Motor neuron (in vitro differentiated cells): ENCODE measurements at regions of chr3 and their contacts with region 1.

Region 1: DNA sequence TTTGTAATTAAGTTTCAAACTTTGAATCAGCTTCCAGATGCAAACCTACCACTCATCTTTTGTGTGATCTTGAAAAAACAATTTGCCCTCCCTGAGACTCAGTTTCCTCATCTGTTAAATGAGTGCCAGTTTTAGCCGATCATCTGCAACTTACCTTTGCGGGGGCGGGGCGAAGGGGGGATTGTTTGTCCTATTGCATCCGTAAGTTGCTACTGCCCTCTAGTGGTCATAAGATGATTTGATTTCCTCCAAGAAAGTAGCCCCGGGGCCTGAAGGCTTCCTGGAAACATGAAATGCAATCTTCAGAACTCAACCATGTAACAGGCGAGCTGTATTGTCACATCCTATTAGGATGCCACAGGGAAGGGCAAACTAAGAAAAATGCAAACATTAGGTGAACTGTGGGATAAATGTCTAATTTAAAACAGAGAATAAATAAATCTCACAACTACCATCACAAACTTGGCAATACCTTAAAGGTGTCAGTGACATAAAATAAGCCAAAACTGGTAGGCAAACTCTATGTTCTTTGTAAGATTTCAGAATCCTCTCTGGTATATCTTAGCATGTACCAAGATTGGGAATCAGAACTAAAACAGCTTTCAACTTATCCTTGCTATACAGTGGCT is 63.5 kb upstream of the CLDN18 start:
- ATAC-seq: peak in 4 of 8 experiments; percentile 27 to 77 (median 70)
- H3K4me3 ChIP-seq: no peak overlapping the region
- H3K27ac ChIP-seq: no peak overlapping the region
- H3K4me1 ChIP-seq: no peaks in the 10 kb centered on the region

Region 2: GRCh38 chr3:137514853-137515252 is 431.6 kb before region 1 on chr3:
- in situ Hi-C with region 1: no loop called
- ATAC-seq: no peak
- H3K4me3 ChIP-seq: no peak overlapping the region
- H3K27ac ChIP-seq: no peak overlapping the region
- H3K4me1 ChIP-seq: peaks cover 0 to 8% of the 10 kb centered on the region in 2 donors

Region 3: DNA sequence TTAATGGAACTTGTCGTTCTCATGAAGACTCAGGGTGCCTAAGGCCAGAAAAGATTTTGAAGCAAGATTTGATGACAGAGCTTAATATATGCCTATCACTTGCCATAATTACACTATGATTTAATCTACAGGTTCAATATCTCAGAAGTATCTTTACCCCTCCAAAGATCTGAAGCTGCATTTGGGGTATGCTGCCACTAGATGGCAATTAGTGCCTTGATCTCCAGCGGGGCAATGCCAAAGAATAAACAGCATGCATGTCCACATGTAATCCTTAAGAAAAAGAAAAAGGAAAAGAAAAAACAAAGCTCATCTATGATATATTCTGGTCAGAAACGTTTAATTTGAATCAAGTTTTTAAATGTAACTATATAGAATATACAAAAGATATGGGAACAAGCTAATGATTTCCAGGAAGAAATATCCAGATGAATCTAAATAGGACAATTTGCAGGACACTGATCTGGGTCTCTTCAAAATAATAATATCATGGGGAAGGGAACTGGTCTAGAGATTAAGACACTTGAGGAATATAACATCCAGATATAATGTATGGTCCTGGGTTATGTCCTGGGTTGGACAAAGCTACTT is 237.4 kb before region 1 on chr3:
- in situ Hi-C with region 1: loop called in 3 of 9 experiments (anchors 25 kb)
- ATAC-seq: peak in 2 of 8 experiments; percentile 46 to 71
- H3K4me3 ChIP-seq: no peak overlapping the region
- H3K27ac ChIP-seq: no peak overlapping the region
- H3K4me1 ChIP-seq: no peaks in the 10 kb centered on the region